ENCODE measurements at regions of chr15 and their contacts with region 1.

Region 1: GRCh38 chr15:65258375-65259262 is 28.1 kb downstream of the PARP16 start:
- DNase-seq: peak; percentile 43 to 65 (median 47)
- H3K4me3 ChIP-seq: no peak overlapping the region
- H3K27ac ChIP-seq: peak overlapping the region; percentile 67 to 88
- H3K4me1 ChIP-seq: peaks cover 18% of the 10 kb centered on the region
- H3K27me3 ChIP-seq: no peaks in the 10 kb centered on the region
- CTCF ChIP-seq: no peak
- EP300 ChIP-seq: no peak
- POLR2A ChIP-seq: no peak

Region 2: DNA sequence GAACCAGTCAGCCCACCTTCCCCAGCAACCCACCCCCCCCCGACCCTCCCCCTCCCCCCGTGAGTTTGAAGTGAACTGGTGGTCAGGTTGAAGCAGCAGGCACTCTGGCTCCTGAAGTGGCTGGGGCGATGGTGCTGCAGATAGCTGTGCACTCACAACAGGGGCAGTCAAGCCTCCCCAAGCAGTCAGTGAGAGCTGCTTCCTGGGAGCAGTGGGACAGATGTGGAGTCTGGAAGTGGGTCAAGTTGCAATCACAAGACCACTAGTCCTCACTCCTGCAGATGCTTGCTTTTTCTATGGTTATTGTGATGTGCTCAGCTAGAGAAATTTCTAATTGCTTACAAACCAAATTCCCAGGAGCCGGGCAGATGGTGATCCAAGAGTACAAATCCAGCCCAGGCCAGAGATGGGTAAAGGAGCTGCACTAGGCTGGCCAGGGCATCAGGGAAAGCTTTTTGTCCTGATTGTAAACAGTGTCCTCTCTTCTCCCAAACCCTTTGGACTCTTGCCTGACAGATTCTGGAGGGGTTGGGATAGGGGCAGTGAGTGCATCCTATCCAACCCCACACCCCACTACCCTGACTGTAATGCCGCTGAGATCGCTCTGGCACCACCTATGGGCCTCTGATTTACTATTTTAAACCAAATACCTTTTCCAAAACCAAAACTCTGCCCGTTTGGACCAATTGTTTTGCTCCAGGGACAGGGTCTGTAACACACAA is 63.6 kb before region 1 on chr15:
- intact Hi-C with region 1: loop called in 1 of 4 experiments (anchors 5 kb)
- DNase-seq: no peak
- H3K4me3 ChIP-seq: no peak overlapping the region
- H3K27ac ChIP-seq: no peak overlapping the region
- H3K4me1 ChIP-seq: no peaks in the 10 kb centered on the region
- H3K27me3 ChIP-seq: no peaks in the 10 kb centered on the region
- CTCF ChIP-seq: no peak
- EP300 ChIP-seq: no peak
- POLR2A ChIP-seq: no peak